ENCODE measurements at regions of chr20 and their contacts with region 1.

Region 1: GRCh38 chr20:9978397-9979004 is 56.3 kb upstream of the ANKEF1 start:
- DNase-seq: peak; percentile 82
- ATAC-seq: peak; percentile 95
- H3K4me3 ChIP-seq: no peak overlapping the region
- H3K27ac ChIP-seq: no peak overlapping the region
- H3K4me1 ChIP-seq: no peaks in the 10 kb centered on the region
- H3K27me3 ChIP-seq: no peaks in the 10 kb centered on the region
- CTCF ChIP-seq: peak; percentile 94
- EP300 ChIP-seq: no peak
- POLR2A ChIP-seq: no peak
- RAD21 ChIP-seq: peak; percentile 92

Region 2: GRCh38 chr20:9616833-9617489 is 361.5 kb before region 1 on chr20:
- CTCF ChIA-PET with region 1: no interaction called
- POLR2A ChIA-PET with region 1: no interaction called
- in situ Hi-C with region 1: no loop called
- intact Hi-C with region 1: loop called (anchors 2 kb)
- DNase-seq: peak; percentile 67
- ATAC-seq: peak; percentile 80
- H3K4me3 ChIP-seq: no peak overlapping the region
- H3K27ac ChIP-seq: no peak overlapping the region
- H3K4me1 ChIP-seq: no peaks in the 10 kb centered on the region
- H3K27me3 ChIP-seq: no peaks in the 10 kb centered on the region
- CTCF ChIP-seq: peak; percentile 89
- EP300 ChIP-seq: no peak
- POLR2A ChIP-seq: no peak
- RAD21 ChIP-seq: peak; percentile 85

Region 3: DNA sequence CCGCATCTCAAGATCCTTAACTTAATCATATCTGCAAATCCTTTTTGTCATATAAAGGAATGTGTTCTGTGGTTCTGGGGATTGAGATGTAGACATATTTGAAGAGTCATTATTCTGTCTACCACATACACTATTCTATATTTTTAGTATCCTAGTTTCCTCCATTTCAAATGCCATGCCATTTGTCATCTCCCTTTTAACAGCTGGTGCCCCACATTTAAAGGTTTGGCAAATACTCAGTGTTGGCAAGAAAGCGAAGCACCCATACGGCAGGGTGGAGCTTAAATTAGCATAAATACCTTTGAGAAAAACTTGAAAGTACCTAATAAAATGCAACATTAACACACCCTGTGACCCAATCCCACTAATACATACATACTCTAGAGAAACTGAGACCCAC is 171.4 kb before region 1 on chr20:
- CTCF ChIA-PET with region 1: no interaction called
- POLR2A ChIA-PET with region 1: no interaction called
- in situ Hi-C with region 1: no loop called
- intact Hi-C with region 1: no loop called
- DNase-seq: no peak
- ATAC-seq: no peak
- H3K4me3 ChIP-seq: no peak overlapping the region
- H3K27ac ChIP-seq: no peak overlapping the region
- H3K4me1 ChIP-seq: no peaks in the 10 kb centered on the region
- H3K27me3 ChIP-seq: no peaks in the 10 kb centered on the region
- CTCF ChIP-seq: no peak
- EP300 ChIP-seq: no peak
- POLR2A ChIP-seq: no peak
- RAD21 ChIP-seq: no peak

Region 4: GRCh38 chr20:9955646-9956045 is 22.9 kb before region 1 on chr20:
- CTCF ChIA-PET with region 1: no interaction called
- POLR2A ChIA-PET with region 1: no interaction called
- in situ Hi-C with region 1: no loop called
- intact Hi-C with region 1: no loop called
- DNase-seq: no peak
- ATAC-seq: no peak
- H3K4me3 ChIP-seq: no peak overlapping the region
- H3K27ac ChIP-seq: no peak overlapping the region
- H3K4me1 ChIP-seq: no peaks in the 10 kb centered on the region
- H3K27me3 ChIP-seq: no peaks in the 10 kb centered on the region
- CTCF ChIP-seq: no peak
- EP300 ChIP-seq: no peak
- POLR2A ChIP-seq: no peak
- RAD21 ChIP-seq: no peak

Region 5: DNA sequence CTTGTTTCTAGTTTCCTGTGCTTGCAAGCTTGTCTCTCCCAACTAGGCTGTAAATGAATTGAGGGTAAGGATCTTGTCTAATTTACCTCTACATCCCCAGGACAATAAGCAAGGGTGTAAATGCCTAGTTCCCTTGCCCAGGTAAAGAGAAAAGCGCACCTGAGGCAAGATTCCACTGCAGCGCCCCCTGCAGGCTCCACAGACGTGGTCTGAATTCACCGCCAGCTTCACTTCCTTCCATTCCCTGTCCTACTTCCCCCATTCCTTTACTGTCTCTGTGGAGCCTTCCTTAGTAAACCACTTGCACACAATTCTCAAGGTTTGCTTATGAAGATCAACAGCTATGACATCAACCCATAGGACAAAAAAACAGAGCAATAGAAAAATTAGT is 98.6 kb after region 1 on chr20:
- CTCF ChIA-PET with region 1: interaction called, 7 read pairs
- POLR2A ChIA-PET with region 1: no interaction called
- in situ Hi-C with region 1: no loop called
- intact Hi-C with region 1: loop called (anchors 1 kb)
- DNase-seq: no peak
- ATAC-seq: peak; percentile 52
- H3K4me3 ChIP-seq: no peak overlapping the region
- H3K27ac ChIP-seq: no peak overlapping the region
- H3K4me1 ChIP-seq: peaks cover 14% of the 10 kb centered on the region
- H3K27me3 ChIP-seq: no peaks in the 10 kb centered on the region
- CTCF ChIP-seq: peak; percentile 61
- EP300 ChIP-seq: no peak
- POLR2A ChIP-seq: no peak
- RAD21 ChIP-seq: no peak

Region 6: GRCh38 chr20:10225439-10226060 is 247.0 kb after region 1 on chr20:
- CTCF ChIA-PET with region 1: interaction called, 4 read pairs
- POLR2A ChIA-PET with region 1: no interaction called
- in situ Hi-C with region 1: loop called (anchors 5 kb)
- intact Hi-C with region 1: loop called (anchors 1 kb)
- DNase-seq: peak; percentile 54
- ATAC-seq: peak; percentile 89
- H3K4me3 ChIP-seq: no peak overlapping the region
- H3K27ac ChIP-seq: no peak overlapping the region
- H3K4me1 ChIP-seq: peaks cover 9% of the 10 kb centered on the region
- H3K27me3 ChIP-seq: 0 out of 5 replicates have a peak, but pooled peaks cover 0 to 1% of the 10 kb centered on the region in 2 experiments
- CTCF ChIP-seq: peak; percentile 47
- EP300 ChIP-seq: no peak
- POLR2A ChIP-seq: no peak
- RAD21 ChIP-seq: peak; percentile 34; the same call in 1 of the 2 replicates

Region 7: DNA sequence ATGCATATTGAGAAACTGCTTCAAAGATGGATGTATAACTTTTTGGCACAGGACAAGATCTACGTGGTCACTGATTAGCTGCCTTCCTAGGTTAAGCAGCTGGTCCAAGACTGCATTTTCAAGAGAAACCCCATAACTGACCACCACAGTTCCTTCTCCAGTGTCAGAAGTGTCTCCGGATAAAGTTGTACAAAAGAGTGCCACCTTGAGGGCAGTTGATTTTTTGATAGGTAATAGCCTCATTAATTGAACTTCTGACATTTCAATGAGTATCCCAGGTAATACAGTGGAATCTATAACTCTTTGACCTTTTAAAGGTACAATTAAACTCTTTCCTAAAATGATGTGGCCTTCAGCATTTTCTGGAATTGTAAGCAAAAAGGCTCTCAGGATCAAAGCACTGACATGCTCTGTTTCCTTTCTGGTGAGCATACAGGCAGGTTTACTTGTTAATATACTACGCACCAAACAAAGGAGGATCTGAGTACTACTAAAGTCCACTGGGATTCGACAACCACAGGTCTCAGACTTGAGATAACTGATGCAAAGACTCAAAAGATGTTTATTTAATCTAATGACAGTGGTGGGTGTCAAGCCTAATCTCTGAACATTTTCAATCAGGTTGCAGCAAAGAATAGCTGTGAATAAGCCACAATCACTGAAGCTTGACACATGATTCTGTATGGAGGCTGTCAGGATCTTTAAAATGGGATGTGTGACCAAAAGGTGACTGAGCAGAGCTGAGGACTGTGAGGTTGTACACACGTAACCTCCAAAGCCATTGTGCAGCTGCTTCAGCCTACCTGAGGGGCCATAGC is 434.3 kb after region 1 on chr20:
- CTCF ChIA-PET with region 1: no interaction called
- POLR2A ChIA-PET with region 1: no interaction called
- in situ Hi-C with region 1: no loop called
- intact Hi-C with region 1: loop called (anchors 1 kb)
- DNase-seq: no peak
- ATAC-seq: peak; percentile 55; the same call in 2 of the 3 replicates
- H3K4me3 ChIP-seq: no peak overlapping the region
- H3K27ac ChIP-seq: no peak overlapping the region
- H3K4me1 ChIP-seq: 0 out of 2 replicates have a peak, but pooled peaks cover 7% of the 10 kb centered on the region
- H3K27me3 ChIP-seq: no peaks in the 10 kb centered on the region
- CTCF ChIP-seq: peak; percentile 60
- EP300 ChIP-seq: no peak
- POLR2A ChIP-seq: 0 out of 4 replicates have a peak, but pooled peaks of 1 of the 2 experiments have one; percentile 23
- RAD21 ChIP-seq: no peak

Region 8: DNA sequence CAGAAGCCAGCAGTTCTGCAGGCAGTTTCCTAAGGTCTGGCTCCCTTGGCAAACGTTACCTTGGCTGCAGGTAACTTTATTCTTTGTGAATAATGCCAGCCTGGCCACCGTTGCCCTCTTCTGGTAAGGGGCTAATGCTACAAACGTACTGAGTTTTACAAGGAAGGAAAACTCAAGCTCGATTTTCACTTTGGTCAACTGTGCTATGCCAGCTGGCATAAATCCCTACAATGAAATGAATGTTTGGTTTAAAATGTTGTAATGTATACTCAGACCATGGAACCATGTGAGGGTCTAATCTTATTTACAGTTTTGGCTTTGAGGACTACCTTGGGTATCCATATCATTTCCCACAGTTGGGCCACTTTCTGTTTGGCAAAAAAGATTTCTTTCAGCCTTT is 558.0 kb after region 1 on chr20:
- CTCF ChIA-PET with region 1: no interaction called
- POLR2A ChIA-PET with region 1: no interaction called
- in situ Hi-C with region 1: loop called (anchors 10 kb)
- intact Hi-C with region 1: loop called (anchors 5 kb)
- DNase-seq: peak; percentile 61
- ATAC-seq: peak; percentile 12; the same call in 1 of the 3 replicates
- H3K4me3 ChIP-seq: peak overlapping the region in 1 of 3 experiments; percentile 6; a peak in 1 of 6 replicates
- H3K27ac ChIP-seq: peak overlapping the region; percentile 13
- H3K4me1 ChIP-seq: peaks cover 63% of the 10 kb centered on the region
- H3K27me3 ChIP-seq: no peaks in the 10 kb centered on the region
- CTCF ChIP-seq: peak; percentile 77
- EP300 ChIP-seq: no peak
- POLR2A ChIP-seq: no peak
- RAD21 ChIP-seq: peak; percentile 76

Region 9: GRCh38 chr20:11274141-11274594 is 1295.7 kb after region 1 on chr20:
- CTCF ChIA-PET with region 1: no interaction called
- POLR2A ChIA-PET with region 1: no interaction called
- in situ Hi-C with region 1: no loop called
- intact Hi-C with region 1: loop called (anchors 1 kb)
- DNase-seq: peak; percentile 75
- ATAC-seq: peak; percentile 91
- H3K4me3 ChIP-seq: no peak overlapping the region
- H3K27ac ChIP-seq: no peak overlapping the region
- H3K4me1 ChIP-seq: no peaks in the 10 kb centered on the region
- H3K27me3 ChIP-seq: peaks cover 0 to 8% of the 10 kb centered on the region in 2 experiments; a peak in 1 of 5 replicates
- CTCF ChIP-seq: peak; percentile 91
- EP300 ChIP-seq: no peak
- POLR2A ChIP-seq: no peak
- RAD21 ChIP-seq: peak; percentile 83

Measured in HepG2 (cell line).